Endothelial cell of umbilical vein (primary cell): ENCODE measurements at regions of chr20 and their contacts with region 1.

Region 1: GRCh38 chr20:41003143-41003883 is 25.3 kb upstream of the TOP1 start:
- DNase-seq: peak; percentile 96
- H3K4me3 ChIP-seq: peak overlapping the region in 1 of 3 experiments; percentile 9
- H3K27ac ChIP-seq: peak overlapping the region; percentile 95
- H3K4me1 ChIP-seq: peaks cover 60% of the 10 kb centered on the region
- H3K27me3 ChIP-seq: no peaks in the 10 kb centered on the region
- CTCF ChIP-seq: no peak
- POLR2A ChIP-seq: no peak

Region 2: GRCh38 chr20:41028348-41029148 is 25.2 kb after region 1 on chr20 and contains the start of gene TOP1:
- CTCF ChIA-PET with region 1: interaction called, 4 read pairs
- POLR2A ChIA-PET with region 1: interaction called, 4 read pairs
- dilution Hi-C with region 1: no loop called
- intact Hi-C with region 1: loop called (anchors 1 kb)
- DNase-seq: peak; percentile 100
- H3K4me3 ChIP-seq: peak within 1 kb of the TSS; percentile 83 to 98 (median 96)
- H3K27ac ChIP-seq: peak within 1 kb of the TSS; percentile 98
- H3K4me1 ChIP-seq: peaks cover 38% of the 10 kb centered on the region
- H3K27me3 ChIP-seq: no peaks in the 10 kb centered on the region
- CTCF ChIP-seq: no peak
- POLR2A ChIP-seq: peak; percentile 97
- total RNA-seq, gene TOP1: 75.1 and 77.4 TPM in 2 replicates

Region 3: GRCh38 chr20:41072190-41072863 is 69.0 kb after region 1 on chr20:
- CTCF ChIA-PET with region 1: interaction called, 9 read pairs
- POLR2A ChIA-PET with region 1: interaction called, 3 read pairs
- dilution Hi-C with region 1: no loop called
- intact Hi-C with region 1: loop called (anchors 1 kb)
- DNase-seq: peak; percentile 93
- H3K4me3 ChIP-seq: peak overlapping the region in 1 of 3 experiments; percentile 30
- H3K27ac ChIP-seq: peak overlapping the region; percentile 83
- H3K4me1 ChIP-seq: peaks cover 68% of the 10 kb centered on the region
- H3K27me3 ChIP-seq: no peaks in the 10 kb centered on the region
- CTCF ChIP-seq: no peak
- POLR2A ChIP-seq: no peak

Region 4: DNA sequence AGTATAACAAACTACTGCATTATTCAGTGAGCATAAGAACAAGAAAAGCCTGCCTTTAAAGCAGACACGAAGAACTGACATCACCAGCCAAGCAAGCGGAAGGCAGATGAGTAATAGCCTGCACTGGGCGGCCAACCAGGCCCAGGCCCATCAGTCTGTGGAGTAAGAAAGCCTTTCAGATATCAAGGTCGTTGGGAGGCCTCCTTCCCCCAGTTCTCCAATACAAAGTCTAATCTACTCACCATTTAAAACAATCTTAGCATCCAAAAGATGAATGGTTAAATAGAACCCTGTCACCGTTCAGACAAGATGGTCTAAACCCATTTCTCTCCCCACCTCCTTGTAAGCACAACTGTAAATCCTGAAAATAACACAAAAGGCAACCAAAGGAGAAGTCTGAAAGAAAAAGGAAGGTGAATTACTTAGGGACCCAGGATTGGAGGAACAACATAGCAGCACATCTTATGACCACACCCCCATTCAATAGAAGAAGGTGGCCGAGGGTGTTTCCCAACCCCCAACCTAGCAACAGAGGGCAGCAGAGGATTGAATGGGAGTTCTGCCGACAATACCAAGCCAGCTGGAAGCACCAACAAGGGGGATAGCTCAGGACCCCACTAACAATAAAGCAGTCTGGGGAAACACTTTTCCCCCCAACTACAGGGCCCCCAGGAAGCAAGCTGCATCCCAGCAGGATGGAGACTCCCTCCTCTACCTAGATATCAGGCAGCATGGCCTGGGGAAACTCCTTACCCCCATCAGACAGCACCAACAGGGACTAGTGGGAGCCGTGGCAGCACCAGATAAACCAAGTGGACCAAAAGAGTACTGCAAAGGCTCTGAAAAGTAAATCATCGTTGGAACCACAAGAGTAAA is 246.3 kb after region 1 on chr20:
- CTCF ChIA-PET with region 1: no interaction called
- POLR2A ChIA-PET with region 1: no interaction called
- dilution Hi-C with region 1: no loop called
- intact Hi-C with region 1: loop called (anchors 2 kb)
- DNase-seq: peak; percentile 92
- H3K4me3 ChIP-seq: peak overlapping the region in 1 of 3 experiments; percentile 63
- H3K27ac ChIP-seq: peak overlapping the region; percentile 99
- H3K4me1 ChIP-seq: peaks cover 67% of the 10 kb centered on the region
- H3K27me3 ChIP-seq: no peaks in the 10 kb centered on the region
- CTCF ChIP-seq: peak in 1 of 2 donors; percentile 34
- POLR2A ChIP-seq: peak; percentile 12

Region 5: GRCh38 chr20:42530822-42531448 is 1527.6 kb after region 1 on chr20:
- CTCF ChIA-PET with region 1: no interaction called
- POLR2A ChIA-PET with region 1: no interaction called
- dilution Hi-C with region 1: no loop called
- intact Hi-C with region 1: no loop called
- DNase-seq: no peak
- H3K4me3 ChIP-seq: no peak overlapping the region
- H3K27ac ChIP-seq: no peak overlapping the region
- H3K4me1 ChIP-seq: no peaks in the 10 kb centered on the region
- H3K27me3 ChIP-seq: no peaks in the 10 kb centered on the region
- CTCF ChIP-seq: peak in 1 of 2 donors; percentile 4
- POLR2A ChIP-seq: no peak